ENCODE measurements at regions of chr1 and their contacts with region 1.

Region 1: DNA sequence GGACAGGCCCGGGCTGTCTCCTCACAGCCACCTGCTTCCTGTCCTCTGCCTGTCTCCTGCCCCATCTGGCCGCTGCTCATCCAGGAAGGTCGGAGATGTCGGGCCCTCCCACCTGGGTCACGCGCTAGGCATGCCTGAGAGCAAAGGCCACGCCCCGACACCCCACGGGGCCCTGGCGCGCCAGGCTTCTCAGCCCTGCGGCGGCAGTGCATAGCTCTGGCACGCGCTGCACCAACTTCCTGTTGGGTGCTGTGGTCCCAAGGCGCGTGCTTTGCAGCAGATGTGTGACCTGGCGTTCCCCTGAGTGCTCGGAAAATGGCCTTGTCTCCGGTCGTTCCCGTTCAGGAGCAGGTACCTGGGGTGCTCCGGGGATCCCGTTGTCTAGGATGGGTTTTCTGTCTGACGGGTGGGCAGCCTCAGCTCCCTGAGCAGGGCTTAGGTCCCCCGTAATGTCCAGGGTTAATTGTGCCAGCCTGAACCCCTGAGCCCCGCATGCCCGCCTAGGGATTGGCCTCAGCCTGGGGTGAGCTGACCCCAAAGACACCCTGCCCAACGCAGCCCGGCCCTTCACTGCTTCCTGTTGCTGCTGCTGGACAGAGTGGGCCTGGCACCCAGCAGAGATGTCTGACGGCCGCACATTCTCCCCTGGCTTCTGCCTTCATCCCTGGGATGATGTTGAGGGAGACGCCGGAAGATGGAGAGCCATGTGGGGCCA is 19.4 kb upstream of the KCNAB2 start:
- DNase-seq: peak; percentile 83
- ATAC-seq: peak; percentile 90
- H3K4me3 ChIP-seq: peak overlapping the region; percentile 89
- H3K27ac ChIP-seq: peak overlapping the region; percentile 82
- H3K4me1 ChIP-seq: peaks cover 40% of the 10 kb centered on the region
- H3K27me3 ChIP-seq: no peaks in the 10 kb centered on the region
- CTCF ChIP-seq: 0 out of 6 replicates have a peak, but pooled peaks of 1 of the 3 experiments have one; percentile 4
- EP300 ChIP-seq: peak in 1 of 2 experiments; percentile 15; a peak in 1 of 4 replicates
- POLR2A ChIP-seq: peak; percentile 88
- RAD21 ChIP-seq: no peak

Region 2: GRCh38 chr1:5992026-5992813 is 34.0 kb before region 1 on chr1 and contains the start of gene NPHP4:
- CTCF ChIA-PET with region 1: interaction called, 15 read pairs
- POLR2A ChIA-PET with region 1: interaction called, 38 read pairs
- RAD21 ChIA-PET with region 1: interaction called, 13 read pairs
- SMC1A ChIA-PET with region 1: interaction called, 8 read pairs
- in situ Hi-C with region 1: no loop called
- intact Hi-C with region 1: loop called (anchors 1 kb)
- DNase-seq: peak; percentile 99
- ATAC-seq: peak; percentile 94
- H3K4me3 ChIP-seq: peak within 1 kb of the TSS; percentile 95
- H3K27ac ChIP-seq: peak within 1 kb of the TSS; percentile 71
- H3K4me1 ChIP-seq: peaks cover 16% of the 10 kb centered on the region
- H3K27me3 ChIP-seq: no peaks in the 10 kb centered on the region
- CTCF ChIP-seq: no peak; a peak in 1 of 6 replicates
- EP300 ChIP-seq: no peak
- POLR2A ChIP-seq: peak; percentile 74
- RAD21 ChIP-seq: no peak
- polyA plus RNA-seq, gene NPHP4: 0.16 to 0.66 TPM

Region 3: DNA sequence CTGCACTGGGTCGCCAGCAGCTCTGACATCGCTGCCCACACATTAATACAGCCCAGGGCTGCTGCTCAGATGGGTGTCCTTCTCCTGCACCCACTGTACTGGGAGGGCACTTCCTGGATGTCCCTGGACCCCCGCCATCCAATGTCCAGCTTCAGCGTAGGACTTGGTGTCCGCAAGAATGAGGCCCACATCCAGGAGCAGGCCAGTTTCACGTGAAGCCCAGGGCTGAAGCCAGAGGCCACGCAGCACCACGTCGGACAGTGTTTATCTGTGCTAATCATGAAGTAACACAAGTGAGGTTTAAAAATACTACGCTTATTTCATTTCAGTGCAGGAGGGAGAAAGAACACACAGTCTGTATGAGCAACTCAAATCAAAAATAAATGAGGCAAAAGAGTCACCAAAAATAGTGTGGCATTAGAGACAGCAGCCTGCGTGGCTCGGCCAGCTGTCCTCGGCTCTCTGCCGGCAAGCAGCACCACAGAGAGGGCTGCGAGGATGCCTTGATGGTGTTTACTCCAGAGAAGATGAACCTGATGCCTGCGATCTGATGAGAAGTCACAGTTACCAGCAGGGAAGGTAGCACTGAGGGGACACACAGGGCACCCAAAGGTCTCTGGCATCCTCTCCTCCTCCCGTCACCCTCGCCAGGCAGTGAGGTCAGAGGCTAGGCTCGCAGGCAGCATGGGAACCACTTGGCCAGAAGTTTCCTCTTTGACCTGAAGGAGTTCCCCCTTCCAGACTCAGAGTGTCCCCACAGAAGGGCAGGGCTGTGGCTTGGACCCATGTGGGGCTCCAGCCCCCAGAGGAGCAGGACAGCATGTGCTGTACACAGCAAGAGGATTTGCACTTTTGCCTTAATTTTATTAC is 11.9 kb before region 1 on chr1:
- CTCF ChIA-PET with region 1: no interaction called
- POLR2A ChIA-PET with region 1: no interaction called
- RAD21 ChIA-PET with region 1: no interaction called
- SMC1A ChIA-PET with region 1: no interaction called
- in situ Hi-C with region 1: no loop called
- intact Hi-C with region 1: no loop called
- DNase-seq: no peak
- ATAC-seq: no peak
- H3K4me3 ChIP-seq: no peak overlapping the region
- H3K27ac ChIP-seq: no peak overlapping the region
- H3K4me1 ChIP-seq: peaks cover 3% of the 10 kb centered on the region; the same call in 1 of the 2 replicates
- H3K27me3 ChIP-seq: no peaks in the 10 kb centered on the region
- CTCF ChIP-seq: no peak
- EP300 ChIP-seq: no peak
- POLR2A ChIP-seq: no peak
- RAD21 ChIP-seq: no peak

Measured in GM12878 (cell line).